A673 (cell line): ENCODE measurements at regions of chr1 and their contacts with region 1.

Region 1: DNA sequence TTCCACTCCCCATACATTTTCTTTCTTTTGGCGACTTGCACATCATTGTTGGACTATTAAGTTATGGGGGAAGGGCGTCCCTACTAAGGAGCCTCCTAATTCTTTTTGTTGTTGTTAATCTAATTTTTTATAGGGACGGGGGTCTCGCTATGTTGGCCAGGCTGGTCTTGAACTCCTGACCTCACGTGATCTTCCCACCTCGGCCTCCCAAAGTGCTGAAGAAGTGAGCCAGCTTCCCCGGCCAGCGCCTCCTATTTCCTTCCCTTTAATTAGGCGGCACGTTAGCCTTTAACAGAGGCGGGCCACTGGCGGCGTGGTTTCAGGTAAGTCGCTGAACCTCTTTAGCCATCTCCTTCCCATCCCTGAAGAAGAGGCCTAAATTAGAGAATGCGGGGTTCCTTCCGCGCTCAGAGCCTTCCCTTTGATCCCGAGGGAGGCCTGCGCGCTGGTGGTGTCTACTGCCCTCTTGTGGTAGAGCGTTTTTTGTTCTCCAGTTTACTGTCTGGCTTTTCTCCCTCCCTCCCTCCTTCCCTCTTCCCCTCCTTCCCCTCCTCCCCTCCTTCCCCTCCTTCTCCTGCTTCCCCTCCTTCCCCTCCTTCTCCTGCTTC is 38.1 kb downstream of the TNFRSF9 start:
- DNase-seq: peak; percentile 91
- H3K4me3 ChIP-seq: no peak overlapping the region
- H3K27ac ChIP-seq: no peak overlapping the region
- H3K4me1 ChIP-seq: peaks cover 4% of the 10 kb centered on the region
- H3K27me3 ChIP-seq: no peaks in the 10 kb centered on the region
- CTCF ChIP-seq: peak; percentile 67

Region 2: DNA sequence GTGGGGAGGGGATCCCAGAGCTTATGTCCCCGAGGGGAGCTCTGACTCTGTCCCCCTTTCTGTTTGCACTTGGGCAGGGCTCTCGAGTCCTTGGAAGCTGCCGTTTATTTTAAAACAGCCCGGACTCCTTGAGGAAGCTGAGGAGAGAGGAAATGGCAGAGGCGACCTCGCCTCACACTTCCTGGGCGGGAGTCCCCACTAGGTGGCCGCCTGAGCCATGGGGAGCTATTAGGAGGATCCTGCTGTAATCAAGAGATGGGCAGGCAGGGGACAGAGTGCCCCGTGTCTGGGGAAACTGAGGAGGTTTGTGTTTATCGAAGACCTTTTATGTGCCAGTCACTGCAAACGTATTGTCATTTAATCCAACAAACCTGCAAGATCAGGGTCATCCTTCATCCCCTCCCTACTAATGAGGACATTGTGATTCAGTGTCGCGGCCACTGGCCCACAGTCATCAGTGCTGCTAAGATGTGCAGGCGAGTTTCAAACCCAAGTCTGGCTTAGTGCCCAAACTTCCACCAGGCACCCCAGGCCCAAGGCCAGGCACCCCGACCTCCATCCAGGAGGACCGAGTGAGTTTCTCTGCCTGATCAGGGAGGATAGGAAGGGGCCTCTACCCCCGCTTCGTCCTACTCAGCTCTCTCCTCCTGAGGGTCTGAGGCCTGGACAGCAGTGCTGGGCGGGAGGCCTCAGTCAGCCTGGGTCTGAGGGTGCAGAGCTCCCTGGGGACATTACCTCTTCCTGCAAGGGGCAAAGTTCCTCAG is 448.3 kb before region 1 on chr1:
- CTCF ChIA-PET with region 1: no interaction called
- POLR2A ChIA-PET with region 1: no interaction called
- intact Hi-C with region 1: no loop called
- DNase-seq: peak; percentile 52
- H3K4me3 ChIP-seq: no peak overlapping the region
- H3K27ac ChIP-seq: no peak overlapping the region
- H3K4me1 ChIP-seq: no peaks in the 10 kb centered on the region
- H3K27me3 ChIP-seq: no peaks in the 10 kb centered on the region
- CTCF ChIP-seq: peak; percentile 69

Region 3: DNA sequence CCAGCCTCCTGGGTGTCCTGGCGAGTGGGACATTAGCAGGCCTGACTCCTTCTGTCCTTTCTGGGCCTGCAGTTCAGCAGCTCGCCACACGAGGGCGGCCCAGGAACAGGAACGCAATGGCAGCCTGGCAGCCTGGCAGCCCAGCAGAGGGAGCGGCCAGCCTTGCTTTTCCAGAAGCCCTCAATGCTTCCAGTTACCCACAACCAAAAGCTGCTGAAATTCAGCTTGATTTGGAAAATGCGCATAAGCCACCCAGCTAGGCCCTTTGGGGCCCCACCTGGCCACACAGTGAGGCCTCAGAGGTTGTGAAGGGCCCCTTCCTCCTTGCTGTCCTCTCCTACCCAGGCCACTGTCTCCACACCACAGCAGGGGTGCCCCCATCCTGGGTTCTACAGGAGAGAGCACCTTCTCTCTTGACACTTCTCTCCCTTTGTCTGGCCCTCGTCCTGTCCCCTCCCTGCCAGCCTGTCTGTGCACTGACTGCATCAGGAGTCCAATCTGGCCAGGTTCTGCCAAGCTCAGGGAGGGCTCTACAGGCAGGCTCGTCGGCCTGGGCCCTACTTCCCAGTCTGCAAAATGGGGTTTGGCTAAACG is 234.9 kb before region 1 on chr1:
- CTCF ChIA-PET with region 1: no interaction called
- POLR2A ChIA-PET with region 1: interaction called, 4 read pairs
- intact Hi-C with region 1: loop called (anchors 2 kb)
- DNase-seq: peak; percentile 87
- H3K4me3 ChIP-seq: no peak overlapping the region
- H3K27ac ChIP-seq: no peak overlapping the region
- H3K4me1 ChIP-seq: peaks cover 4% of the 10 kb centered on the region
- H3K27me3 ChIP-seq: no peaks in the 10 kb centered on the region
- CTCF ChIP-seq: peak; percentile 99

Region 4: GRCh38 chr1:7808253-7808844 is 94.2 kb before region 1 on chr1:
- CTCF ChIA-PET with region 1: interaction called, 15 read pairs
- POLR2A ChIA-PET with region 1: no interaction called
- intact Hi-C with region 1: loop called (anchors 1 kb)
- DNase-seq: peak; percentile 65
- H3K4me3 ChIP-seq: no peak overlapping the region
- H3K27ac ChIP-seq: no peak overlapping the region
- H3K4me1 ChIP-seq: no peaks in the 10 kb centered on the region
- H3K27me3 ChIP-seq: no peaks in the 10 kb centered on the region
- CTCF ChIP-seq: peak; percentile 72

Region 5: DNA sequence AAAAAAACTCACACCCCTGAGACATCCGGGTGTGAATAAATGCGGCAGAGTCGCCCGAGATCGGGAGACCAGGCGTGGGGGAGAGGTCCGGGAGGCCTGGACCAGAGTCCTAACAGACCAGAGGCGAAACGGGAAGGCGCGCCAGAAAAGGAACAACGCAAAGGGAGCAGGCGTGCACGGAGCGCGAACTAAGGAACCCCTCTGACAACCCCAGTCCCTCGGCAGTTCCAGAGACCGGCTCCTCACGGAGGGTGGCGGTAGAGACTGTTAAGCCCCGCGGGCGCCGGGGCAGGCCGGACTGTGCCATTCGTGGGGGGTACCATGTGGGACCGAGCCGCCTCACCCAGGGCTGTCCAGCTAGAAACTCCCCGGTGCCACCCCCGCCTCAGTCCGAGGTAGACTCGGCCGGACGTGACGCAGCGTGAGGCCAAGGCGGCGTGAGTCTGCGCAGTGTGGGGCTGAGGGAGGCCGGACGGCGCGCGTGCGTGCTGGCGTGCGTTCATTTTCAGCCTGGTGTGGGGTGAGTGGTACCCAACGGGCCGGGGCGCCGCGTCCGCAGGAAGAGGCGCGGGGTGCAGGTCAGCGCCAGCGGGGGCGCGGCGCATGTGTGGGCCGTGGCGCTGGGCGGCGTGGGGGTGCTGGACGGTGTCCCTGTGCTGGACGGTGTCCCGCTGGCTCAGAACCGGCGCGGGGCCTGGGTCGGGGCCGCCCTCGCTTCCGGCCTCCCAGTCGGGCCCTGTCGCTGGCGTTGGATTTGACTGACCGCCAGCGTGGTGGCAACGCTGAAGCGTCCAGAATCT is 58.8 kb after region 1 on chr1 and contains the start of gene PARK7:
- CTCF ChIA-PET with region 1: no interaction called
- POLR2A ChIA-PET with region 1: interaction called, 6 read pairs
- intact Hi-C with region 1: loop called (anchors 10 kb)
- DNase-seq: peak; percentile 100
- H3K4me3 ChIP-seq: peak within 1 kb of the TSS; percentile 75
- H3K27ac ChIP-seq: peak within 1 kb of the TSS; percentile 86
- H3K4me1 ChIP-seq: no peaks in the 10 kb centered on the region
- H3K27me3 ChIP-seq: no peaks in the 10 kb centered on the region
- CTCF ChIP-seq: peak; percentile 54
- total RNA-seq, gene PARK7: 352 and 358 TPM in 2 replicates